Motor neuron (in vitro differentiated cells): ENCODE measurements at regions of chrX and their contacts with region 1.

Region 1: DNA sequence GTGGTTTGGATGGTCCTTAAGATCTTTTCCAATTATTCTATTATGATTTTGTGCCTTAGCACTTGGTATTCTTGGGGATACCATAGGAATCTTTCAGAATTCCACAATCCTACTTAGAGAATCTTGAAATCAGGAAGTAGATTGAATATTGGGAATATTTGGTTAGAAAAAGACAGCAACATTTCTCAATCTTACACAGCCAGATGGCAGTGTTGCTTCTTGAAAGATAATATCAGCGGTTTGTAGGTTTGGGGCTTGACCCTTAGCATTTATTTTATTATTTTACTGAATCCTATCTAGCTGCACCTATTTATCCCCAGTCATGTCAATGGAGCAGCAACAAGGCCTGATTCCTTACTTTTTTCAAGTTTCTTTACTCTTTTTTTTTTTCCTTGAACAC is 28.6 kb downstream of the MAGEB1 start:
- ATAC-seq: no peak
- H3K4me3 ChIP-seq: no peak overlapping the region
- H3K27ac ChIP-seq: no peak overlapping the region
- H3K4me1 ChIP-seq: no peaks in the 10 kb centered on the region

Region 2: DNA sequence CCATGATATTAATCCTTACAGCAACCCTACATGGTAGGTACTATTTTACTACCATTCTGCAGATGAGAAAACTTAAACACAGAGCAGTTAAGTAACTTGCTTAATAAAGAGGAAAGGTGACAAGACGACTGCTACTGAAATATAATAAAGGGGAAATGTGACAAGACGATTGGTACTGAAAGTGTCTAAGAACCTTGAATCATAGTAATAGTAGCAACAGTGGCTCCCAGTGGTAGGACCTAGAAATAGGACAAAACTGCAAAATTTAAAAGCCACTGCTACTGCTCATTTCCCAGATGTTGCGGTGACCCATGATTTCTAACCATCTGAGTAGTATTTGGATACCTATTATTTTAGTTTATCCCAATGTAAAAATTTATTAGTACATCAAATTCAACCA is 212.6 kb after region 1 on chrX:
- in situ Hi-C with region 1: loop called in 1 of 9 experiments (anchors 25 kb)
- ATAC-seq: peak in 1 of 8 experiments; percentile 39
- H3K4me3 ChIP-seq: no peak overlapping the region
- H3K27ac ChIP-seq: no peak overlapping the region
- H3K4me1 ChIP-seq: no peaks in the 10 kb centered on the region